Cardiac septum (tissue), 1 donor: ENCODE measurements at regions of chr15 and their contacts with region 1.

Region 1: GRCh38 chr15:44738340-44738984 is 2.1 kb downstream of the TRIM69 start:
- DNase-seq: no peak

Region 2: DNA sequence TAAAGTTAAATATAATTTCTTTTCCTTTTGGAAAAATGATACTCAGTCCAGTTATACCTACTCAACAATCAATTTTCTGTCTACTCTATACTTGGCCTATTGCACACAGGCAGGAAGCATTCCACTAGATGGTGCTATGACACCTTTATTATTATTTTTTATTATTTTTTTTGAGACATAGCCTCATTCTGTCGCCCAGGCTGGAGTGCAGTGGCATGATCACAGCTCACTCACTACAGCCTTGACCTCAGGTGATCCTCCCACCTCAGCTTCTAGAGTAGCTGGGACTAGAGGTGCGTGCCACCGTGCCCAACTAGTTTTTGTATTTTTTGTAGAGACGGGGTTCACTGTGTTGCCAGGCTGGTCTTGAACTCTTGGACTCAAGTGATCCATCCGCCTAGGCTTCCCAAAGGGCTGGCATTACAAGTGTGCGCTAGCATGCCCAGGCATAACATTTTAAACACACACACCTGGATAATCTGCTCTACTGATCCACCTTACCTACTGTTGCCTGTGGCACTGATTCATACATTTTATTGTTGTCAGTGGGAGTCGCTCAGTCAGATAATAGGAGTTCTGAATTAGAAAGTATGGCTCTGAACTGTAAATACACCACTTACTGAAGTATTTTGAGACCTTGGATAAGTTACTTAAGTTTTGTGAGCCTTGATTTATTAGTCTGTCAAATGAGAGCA is 145.3 kb before region 1 on chr15:
- intact Hi-C with region 1: loop called (anchors 10 kb)
- DNase-seq: no peak

Region 3: DNA sequence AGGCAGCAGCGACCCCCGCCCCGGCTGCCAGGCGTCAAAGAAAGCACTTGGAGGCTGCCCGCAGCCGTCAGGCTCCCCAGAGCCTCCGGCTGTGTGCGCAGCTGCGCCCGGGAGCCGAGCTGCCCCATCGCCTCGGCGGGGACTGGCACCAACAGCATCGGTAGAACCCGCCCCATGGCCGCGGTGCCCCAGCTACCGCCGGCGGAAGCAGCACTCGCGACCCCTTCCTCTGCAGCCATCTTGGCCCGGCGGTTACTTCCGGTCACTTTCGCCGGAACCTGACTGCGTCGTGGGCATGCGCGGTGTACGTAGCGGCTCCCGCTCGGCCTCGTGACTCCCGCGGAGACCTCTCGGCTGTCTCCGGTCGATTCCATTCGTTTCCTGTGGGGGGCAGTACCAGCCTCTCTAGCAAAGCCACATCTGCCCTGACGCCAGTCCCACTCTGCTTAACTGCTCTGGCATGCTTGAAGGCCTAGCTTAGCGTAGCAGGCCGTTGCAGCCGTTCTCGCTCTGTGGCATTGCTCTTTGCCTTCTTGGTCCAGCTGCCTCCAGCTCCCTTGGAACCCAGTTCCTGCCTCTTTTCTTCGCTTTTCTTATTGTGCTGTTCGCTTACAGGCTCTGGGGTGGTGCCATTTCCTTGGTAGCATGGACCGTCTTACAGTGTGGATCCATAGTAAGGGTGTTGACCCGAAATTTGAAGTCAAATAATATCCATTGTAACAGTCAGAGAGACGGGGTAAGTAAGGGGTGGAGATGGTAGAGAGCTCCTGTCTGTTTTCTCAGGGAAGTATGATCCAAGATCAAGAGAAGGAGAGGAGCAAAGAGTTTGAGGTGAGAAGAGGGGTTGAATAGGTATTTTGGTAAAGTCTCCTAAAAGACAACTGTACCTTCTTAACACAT is 74.8 kb before region 1 on chr15 and contains the start of gene SPG11:
- intact Hi-C with region 1: loop called (anchors 1 kb)
- DNase-seq: peak; percentile 99
- total RNA-seq, gene SPG11: 49.2 TPM

Region 4: GRCh38 chr15:44698641-44699040 is 39.8 kb before region 1 on chr15:
- intact Hi-C with region 1: no loop called
- DNase-seq: no peak

Region 5: DNA sequence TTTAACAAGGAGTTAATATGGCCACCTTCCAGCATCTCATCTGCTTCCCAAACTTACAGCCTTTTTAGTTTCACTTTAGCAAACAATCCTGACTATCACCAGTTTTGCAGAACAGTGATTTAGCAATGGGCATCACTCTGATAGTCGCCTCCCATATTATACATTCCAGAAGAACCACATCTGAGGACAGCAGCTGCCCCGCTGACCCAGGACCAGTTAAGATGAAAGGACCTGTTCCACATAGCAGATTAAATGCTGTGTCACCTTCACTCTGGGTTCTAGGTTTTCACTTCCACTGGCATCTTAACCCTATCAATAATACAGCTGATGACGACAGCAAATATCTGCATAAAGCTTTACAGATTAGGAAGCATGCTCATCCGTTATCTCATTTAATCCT is 97.6 kb after region 1 on chr15:
- intact Hi-C with region 1: no loop called
- DNase-seq: no peak